Endothelial cell of umbilical vein (primary cell): ENCODE measurements at regions of chr3 and their contacts with region 1.

Region 1: GRCh38 chr3:182713743-182714517 is 79.4 kb upstream of the ATP11B start:
- DNase-seq: peak; percentile 75
- H3K4me3 ChIP-seq: no peak overlapping the region
- H3K27ac ChIP-seq: no peak overlapping the region
- H3K4me1 ChIP-seq: peaks cover 5% of the 10 kb centered on the region
- H3K27me3 ChIP-seq: no peaks in the 10 kb centered on the region
- CTCF ChIP-seq: peak; percentile 40 to 53
- POLR2A ChIP-seq: no peak

Region 2: DNA sequence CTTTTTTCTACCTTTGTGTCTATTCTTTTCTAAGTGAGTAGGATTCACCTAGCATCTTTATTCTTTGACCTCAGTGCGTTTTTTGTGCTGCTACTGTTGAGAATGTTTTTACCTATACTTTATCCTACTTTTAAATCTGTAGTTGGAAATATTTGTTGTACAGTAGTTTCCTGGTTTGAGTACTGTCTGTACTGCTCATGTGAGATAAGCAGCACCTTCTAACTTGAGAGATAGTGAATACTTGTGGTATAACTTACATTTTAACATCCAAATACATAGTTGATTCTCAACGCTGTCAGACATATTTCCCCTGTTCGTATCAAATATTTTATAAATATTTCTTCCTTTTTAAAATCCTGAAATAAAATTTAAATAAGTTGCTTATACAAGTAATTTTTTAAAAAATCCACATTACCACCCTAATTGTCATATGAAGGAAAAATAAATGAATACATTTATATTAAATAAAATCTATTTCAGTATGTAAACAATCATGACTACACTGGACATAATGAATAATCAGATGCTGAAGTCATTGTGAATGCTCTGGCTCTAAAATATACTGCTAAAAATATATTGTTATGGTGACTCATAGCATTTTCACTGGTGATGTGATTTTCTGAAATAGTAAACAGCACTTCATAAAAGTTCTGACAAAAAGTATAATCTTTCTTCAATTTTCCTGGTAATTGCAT is 96.8 kb after region 1 on chr3:
- CTCF ChIA-PET with region 1: interaction called, 13 read pairs
- POLR2A ChIA-PET with region 1: interaction called, 4 read pairs
- dilution Hi-C with region 1: no loop called
- intact Hi-C with region 1: no loop called
- DNase-seq: peak; percentile 59
- H3K4me3 ChIP-seq: no peak overlapping the region
- H3K27ac ChIP-seq: peak overlapping the region; percentile 26
- H3K4me1 ChIP-seq: peaks cover 20% of the 10 kb centered on the region
- H3K27me3 ChIP-seq: no peaks in the 10 kb centered on the region
- CTCF ChIP-seq: no peak
- POLR2A ChIP-seq: no peak

Region 3: GRCh38 chr3:182855076-182855475 is 141.1 kb after region 1 on chr3:
- CTCF ChIA-PET with region 1: interaction called, 25 read pairs
- POLR2A ChIA-PET with region 1: no interaction called
- dilution Hi-C with region 1: no loop called
- intact Hi-C with region 1: no loop called
- DNase-seq: peak; percentile 35
- H3K4me3 ChIP-seq: no peak overlapping the region
- H3K27ac ChIP-seq: no peak overlapping the region
- H3K4me1 ChIP-seq: no peaks in the 10 kb centered on the region
- H3K27me3 ChIP-seq: no peaks in the 10 kb centered on the region
- CTCF ChIP-seq: no peak
- POLR2A ChIP-seq: no peak

Region 4: GRCh38 chr3:182909318-182910040 is 195.5 kb after region 1 on chr3:
- CTCF ChIA-PET with region 1: interaction called, 13 read pairs
- POLR2A ChIA-PET with region 1: no interaction called
- dilution Hi-C with region 1: no loop called
- intact Hi-C with region 1: loop called (anchors 5 kb)
- DNase-seq: peak; percentile 39
- H3K4me3 ChIP-seq: no peak overlapping the region
- H3K27ac ChIP-seq: no peak overlapping the region
- H3K4me1 ChIP-seq: no peaks in the 10 kb centered on the region
- H3K27me3 ChIP-seq: no peaks in the 10 kb centered on the region
- CTCF ChIP-seq: peak; percentile 31 to 43
- POLR2A ChIP-seq: no peak

Region 5: GRCh38 chr3:182921665-182922355 is 207.9 kb after region 1 on chr3:
- CTCF ChIA-PET with region 1: no interaction called
- POLR2A ChIA-PET with region 1: no interaction called
- dilution Hi-C with region 1: no loop called
- intact Hi-C with region 1: no loop called
- DNase-seq: no peak
- H3K4me3 ChIP-seq: no peak overlapping the region
- H3K27ac ChIP-seq: no peak overlapping the region
- H3K4me1 ChIP-seq: no peaks in the 10 kb centered on the region
- H3K27me3 ChIP-seq: no peaks in the 10 kb centered on the region
- CTCF ChIP-seq: no peak
- POLR2A ChIP-seq: no peak

Region 6: DNA sequence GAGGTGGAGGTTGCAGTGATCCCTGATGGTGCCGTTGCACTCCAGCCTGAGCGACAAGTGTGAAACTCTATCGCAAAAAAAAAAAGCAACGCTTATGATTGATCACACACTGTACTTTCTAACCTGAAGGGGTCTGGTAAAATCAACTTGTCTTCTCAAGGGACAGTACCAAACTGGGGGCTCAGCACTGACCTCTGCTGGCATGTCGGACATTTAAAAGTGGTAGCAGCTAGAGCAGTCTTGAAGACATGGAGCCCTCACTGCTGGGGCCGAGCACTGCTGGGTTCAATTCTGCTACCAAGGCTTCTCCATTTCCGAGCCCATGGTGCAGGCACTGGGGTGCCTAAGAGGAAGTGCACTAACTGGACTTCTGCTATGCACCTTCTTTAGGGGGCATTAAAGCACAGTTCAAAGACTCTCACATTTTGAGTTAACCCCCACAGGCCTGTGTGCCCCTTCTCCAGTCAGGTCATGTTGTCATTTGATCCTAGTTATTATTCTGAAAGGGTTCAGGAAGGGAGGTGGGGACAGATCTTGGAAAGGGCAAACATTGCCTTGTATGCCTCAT is 475.0 kb after region 1 on chr3:
- CTCF ChIA-PET with region 1: interaction called, 13 read pairs
- POLR2A ChIA-PET with region 1: no interaction called
- dilution Hi-C with region 1: no loop called
- intact Hi-C with region 1: loop called (anchors 5 kb)
- DNase-seq: peak; percentile 47
- H3K4me3 ChIP-seq: no peak overlapping the region
- H3K27ac ChIP-seq: no peak overlapping the region
- H3K4me1 ChIP-seq: peaks cover 16% of the 10 kb centered on the region
- H3K27me3 ChIP-seq: no peaks in the 10 kb centered on the region
- CTCF ChIP-seq: peak; percentile 36 to 41
- POLR2A ChIP-seq: no peak